Heart left ventricle (tissue), 16 donors: ENCODE measurements at regions of chr1 and their contacts with region 1.

Region 1: GRCh38 chr1:153888533-153888932 is 34.2 kb downstream of the GATAD2B start:
- DNase-seq: no peak
- ATAC-seq: no peak
- H3K4me3 ChIP-seq: no peak overlapping the region
- H3K27ac ChIP-seq: peak overlapping the region in 2 of 12 donors; percentile 26 to 70
- H3K4me1 ChIP-seq: peaks cover 0 to 29% (median 13%) of the 10 kb centered on the region in 12 donors
- H3K27me3 ChIP-seq: no peaks in the 10 kb centered on the region
- CTCF ChIP-seq: no peak
- POLR2A ChIP-seq: no peak

Region 2: DNA sequence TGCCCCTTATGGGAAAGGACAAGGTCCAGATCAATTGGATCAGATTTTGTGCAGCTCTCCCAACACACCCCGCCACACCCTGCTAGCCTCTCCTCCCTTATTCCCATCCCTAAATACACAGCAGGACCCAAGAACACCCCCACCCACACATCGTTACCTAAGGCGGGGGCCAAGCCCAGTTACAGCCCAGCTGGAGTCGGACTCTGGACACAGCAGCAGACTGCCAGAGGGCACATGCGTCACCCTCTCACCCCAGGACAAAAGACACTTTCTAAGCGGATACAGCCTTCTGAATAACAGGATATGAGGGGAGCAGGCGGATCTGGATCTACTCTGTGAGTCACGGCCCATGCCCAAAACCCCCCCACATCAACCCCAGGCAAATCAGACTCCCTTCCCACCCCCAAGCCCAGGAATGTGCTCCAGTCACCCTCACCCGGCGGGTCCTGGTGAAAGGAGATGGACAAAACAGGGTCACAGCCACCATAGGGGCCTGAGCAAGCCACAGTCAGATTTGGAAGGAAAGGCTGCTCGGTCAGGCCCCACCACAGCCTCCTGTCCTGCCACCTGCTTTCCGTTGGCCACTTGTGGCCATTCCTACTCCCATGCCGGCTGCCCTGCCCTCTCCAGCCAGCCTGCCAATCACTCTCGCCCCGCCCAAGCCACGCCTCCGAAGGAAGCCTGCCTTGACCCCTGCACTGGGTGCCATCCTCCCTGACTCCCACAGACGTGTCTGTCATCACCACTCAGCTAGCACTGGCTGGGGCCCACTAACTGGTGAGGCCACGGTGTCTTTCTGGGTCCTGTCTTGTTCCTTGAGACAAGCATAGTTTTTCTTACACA is 279.6 kb before region 1 on chr1:
- intact Hi-C with region 1: no loop called
- DNase-seq: peak; percentile 80 to 85 (median 83)
- ATAC-seq: peak; percentile 71 to 90 (median 74)
- H3K4me3 ChIP-seq: peak overlapping the region; percentile 15 to 69 (median 59)
- H3K27ac ChIP-seq: peak overlapping the region; percentile 87 to 99 (median 96)
- H3K4me1 ChIP-seq: peaks cover 6 to 60% (median 25%) of the 10 kb centered on the region in 12 donors
- H3K27me3 ChIP-seq: no peaks in the 10 kb centered on the region
- CTCF ChIP-seq: no peak
- POLR2A ChIP-seq: peak in 1 of 2 donors; percentile 74

Region 3: GRCh38 chr1:153849487-153850185 is 38.9 kb before region 1 on chr1:
- intact Hi-C with region 1: loop called in 1 of 10 experiments (anchors 5 kb)
- DNase-seq: no peak
- ATAC-seq: no peak
- H3K4me3 ChIP-seq: no peak overlapping the region
- H3K27ac ChIP-seq: no peak overlapping the region
- H3K4me1 ChIP-seq: peaks cover 0 to 13% (median 0%) of the 10 kb centered on the region in 12 donors
- H3K27me3 ChIP-seq: no peaks in the 10 kb centered on the region
- CTCF ChIP-seq: no peak
- POLR2A ChIP-seq: no peak